PC-9 (cell line): ENCODE measurements at regions of chr5 and their contacts with region 1.

Region 1: DNA sequence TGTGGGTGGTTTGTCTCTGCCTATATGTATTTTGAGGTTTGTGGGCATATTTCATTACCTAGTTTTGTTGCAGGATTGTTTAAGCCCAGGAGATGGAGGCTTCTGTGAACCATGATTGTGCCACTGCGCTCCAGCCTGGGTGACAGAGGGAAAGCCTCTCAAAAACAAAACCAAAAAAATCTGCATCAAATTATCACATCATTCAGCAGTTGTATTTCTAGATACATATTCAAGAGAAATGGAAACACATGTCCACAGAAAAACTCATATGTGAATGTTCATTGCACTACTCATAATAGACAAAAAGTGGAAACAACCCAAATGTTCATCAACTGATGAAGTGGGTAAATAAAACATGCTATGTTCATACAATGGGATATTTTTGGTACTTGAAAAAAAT is 29.9 kb downstream of the HSPA4 start:
- DNase-seq: no peak
- H3K4me3 ChIP-seq: no peak overlapping the region
- H3K27ac ChIP-seq: no peak overlapping the region
- H3K4me1 ChIP-seq: no peaks in the 10 kb centered on the region
- H3K27me3 ChIP-seq: no peaks in the 10 kb centered on the region
- CTCF ChIP-seq: no peak

Region 2: DNA sequence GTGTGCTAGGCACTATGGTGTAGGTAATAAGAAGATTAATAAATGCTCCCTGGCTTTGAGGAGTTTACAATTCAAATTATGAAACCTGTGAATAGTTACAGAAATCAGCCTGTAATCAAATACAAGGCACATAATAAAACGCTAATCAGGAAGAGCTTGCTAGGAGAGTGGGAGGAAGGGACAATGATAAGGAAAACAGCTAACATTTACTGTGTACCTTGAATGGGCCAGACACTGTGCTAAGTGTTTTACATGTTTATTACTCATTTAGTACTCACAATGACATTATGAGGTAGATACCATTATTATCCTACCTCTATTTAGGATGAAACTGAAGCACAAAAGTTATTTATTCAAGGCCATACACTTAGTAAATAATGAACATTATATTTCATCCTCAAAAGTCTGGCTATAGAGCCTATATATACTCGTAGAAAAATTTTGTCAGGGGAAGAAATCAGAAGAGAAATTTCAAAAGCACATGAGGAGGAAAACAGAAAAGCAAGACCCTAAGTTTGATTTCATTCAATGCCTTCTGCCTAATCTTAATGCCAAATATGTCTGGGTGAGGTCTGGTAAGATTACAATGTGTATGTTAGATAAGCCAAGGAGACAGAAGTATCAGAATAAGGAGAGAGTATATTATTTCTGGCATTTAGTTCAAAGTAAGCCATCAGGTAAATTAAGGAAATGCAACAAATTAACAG is 154.2 kb before region 1 on chr5:
- CTCF ChIA-PET with region 1: no interaction called
- POLR2A ChIA-PET with region 1: no interaction called
- intact Hi-C with region 1: loop called (anchors 10 kb)
- DNase-seq: no peak
- H3K4me3 ChIP-seq: no peak overlapping the region
- H3K27ac ChIP-seq: no peak overlapping the region
- H3K4me1 ChIP-seq: no peaks in the 10 kb centered on the region
- H3K27me3 ChIP-seq: no peaks in the 10 kb centered on the region
- CTCF ChIP-seq: no peak

Region 3: DNA sequence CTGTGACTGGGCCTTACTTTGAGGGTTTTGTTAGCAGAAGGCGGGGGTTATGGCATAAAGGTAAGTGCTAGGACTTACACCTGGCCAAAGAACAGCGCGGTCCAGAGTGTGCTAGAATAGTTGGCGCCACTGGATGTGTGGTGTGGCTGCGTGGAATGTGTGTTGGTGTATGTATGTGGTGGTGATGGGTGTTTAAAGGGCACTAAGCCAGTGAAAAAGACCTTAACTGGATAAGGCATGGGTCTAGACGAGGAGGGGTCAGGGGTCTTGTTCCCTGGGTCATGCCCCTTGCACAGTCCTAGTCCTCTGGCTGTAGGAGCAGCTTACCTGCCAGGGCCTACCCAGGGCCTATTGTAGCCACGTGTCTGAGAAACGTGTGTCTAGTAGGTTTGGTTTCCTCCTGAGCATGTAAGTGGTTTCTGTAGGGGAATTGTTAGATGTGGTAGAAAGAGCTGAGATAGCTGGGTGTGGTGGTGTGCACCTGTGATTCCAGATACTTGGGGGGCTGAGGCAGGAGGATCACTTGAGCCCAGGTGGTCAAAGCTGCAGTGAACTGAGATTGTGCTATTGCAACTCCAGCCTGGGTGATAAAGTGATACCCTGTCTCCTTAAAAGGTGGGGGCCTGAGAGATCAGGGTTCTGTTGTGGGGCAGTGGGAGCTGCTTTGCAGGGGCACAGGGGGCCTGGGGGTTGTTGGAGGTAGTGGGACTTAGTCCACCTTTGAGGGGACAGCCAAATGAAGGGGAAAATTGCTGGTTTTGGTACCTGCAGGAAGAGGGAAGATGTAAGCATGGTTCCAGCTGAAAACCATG is 25.3 kb after region 1 on chr5:
- CTCF ChIA-PET with region 1: no interaction called
- POLR2A ChIA-PET with region 1: no interaction called
- intact Hi-C with region 1: no loop called
- DNase-seq: no peak
- H3K4me3 ChIP-seq: no peak overlapping the region
- H3K27ac ChIP-seq: no peak overlapping the region
- H3K4me1 ChIP-seq: no peaks in the 10 kb centered on the region; the same call in 1 of the 2 replicates
- H3K27me3 ChIP-seq: no peaks in the 10 kb centered on the region
- CTCF ChIP-seq: no peak